ENCODE measurements at regions of chr7 and their contacts with region 1.

Region 1: GRCh38 chr7:152145853-152146466 is 120.5 kb downstream of the GALNT11 start:
- DNase-seq: peak; percentile 8
- H3K4me3 ChIP-seq: no peak overlapping the region
- H3K27ac ChIP-seq: no peak overlapping the region
- H3K27me3 ChIP-seq: no peaks in the 10 kb centered on the region
- CTCF ChIP-seq: peak; percentile 72

Region 2: DNA sequence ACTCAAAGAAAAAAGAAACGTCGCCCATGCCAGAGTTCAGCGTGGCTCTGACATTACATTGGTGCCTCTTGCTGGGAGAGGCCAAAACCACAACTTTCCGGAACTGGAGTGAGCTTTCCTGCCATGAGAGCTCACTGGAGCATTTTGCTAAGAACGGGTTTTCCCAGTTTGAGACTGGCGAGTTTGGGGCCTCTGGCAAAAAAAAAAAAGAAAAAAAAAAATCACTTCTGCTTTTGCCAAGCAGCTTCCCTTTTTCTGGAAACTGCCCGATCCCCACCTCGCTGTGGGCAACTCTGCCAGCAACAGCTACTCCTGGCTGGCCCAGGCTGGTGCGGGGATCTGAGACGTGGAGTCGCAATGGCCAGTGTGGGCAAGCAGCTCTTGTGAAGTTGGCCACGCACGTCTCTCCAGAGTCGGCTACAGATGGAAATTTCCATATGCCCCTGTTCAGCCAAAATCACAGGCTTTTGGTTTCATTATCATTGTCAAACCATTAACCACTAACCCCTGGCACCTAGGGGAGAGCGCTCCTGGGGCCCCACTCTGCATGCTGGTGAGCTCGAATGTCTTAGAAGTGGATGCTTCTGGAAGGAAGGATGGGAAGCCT is 294.7 kb before region 1 on chr7:
- CTCF ChIA-PET with region 1: no interaction called
- POLR2A ChIA-PET with region 1: no interaction called
- DNase-seq: no peak
- H3K4me3 ChIP-seq: no peak overlapping the region
- H3K27ac ChIP-seq: no peak overlapping the region
- H3K27me3 ChIP-seq: peaks cover 17% of the 10 kb centered on the region
- CTCF ChIP-seq: no peak

Region 3: DNA sequence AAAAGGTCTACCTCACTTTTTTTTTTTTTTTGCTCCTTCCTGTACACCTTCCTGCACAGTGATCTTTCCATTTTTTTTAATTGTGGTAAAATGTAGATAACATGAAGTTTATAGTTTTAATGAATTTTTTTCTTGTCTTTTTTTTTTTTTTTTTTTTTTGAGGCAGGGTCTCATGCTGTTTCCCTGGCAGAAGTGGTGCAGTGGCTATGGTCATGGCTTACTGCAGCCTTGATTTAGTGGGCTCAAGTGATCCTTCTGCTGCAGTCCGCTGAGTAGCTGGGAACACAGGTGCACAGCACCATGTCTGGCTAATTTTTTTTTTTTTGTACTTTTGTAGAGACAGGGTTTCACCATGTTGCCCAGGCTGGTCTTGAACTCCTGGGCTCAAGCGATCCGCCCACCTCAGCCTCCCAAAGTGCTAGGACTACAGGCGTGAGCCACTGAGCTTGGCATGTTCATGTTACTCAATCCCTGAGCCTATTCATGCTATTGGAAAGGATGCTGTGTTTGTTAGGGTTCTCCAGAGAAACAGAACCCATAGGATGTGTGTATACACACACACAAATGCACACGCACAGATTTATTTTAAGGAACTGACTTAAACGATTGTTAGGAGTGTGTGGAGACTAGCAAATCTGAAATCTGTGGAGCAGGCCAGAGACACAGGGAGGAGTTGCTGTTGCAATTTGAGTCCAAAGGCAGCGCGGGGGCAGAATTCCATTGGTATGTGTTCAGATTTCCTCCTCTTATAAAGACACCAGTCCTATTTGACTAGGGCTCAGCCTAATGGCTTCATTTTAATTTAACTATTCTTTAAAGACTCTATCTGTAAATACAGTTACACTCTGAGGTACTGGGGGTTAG is 91.4 kb before region 1 on chr7:
- CTCF ChIA-PET with region 1: no interaction called
- POLR2A ChIA-PET with region 1: no interaction called
- DNase-seq: peak; percentile 26
- H3K4me3 ChIP-seq: no peak overlapping the region
- H3K27ac ChIP-seq: peak overlapping the region; percentile 11
- H3K27me3 ChIP-seq: no peaks in the 10 kb centered on the region
- CTCF ChIP-seq: no peak

Region 4: DNA sequence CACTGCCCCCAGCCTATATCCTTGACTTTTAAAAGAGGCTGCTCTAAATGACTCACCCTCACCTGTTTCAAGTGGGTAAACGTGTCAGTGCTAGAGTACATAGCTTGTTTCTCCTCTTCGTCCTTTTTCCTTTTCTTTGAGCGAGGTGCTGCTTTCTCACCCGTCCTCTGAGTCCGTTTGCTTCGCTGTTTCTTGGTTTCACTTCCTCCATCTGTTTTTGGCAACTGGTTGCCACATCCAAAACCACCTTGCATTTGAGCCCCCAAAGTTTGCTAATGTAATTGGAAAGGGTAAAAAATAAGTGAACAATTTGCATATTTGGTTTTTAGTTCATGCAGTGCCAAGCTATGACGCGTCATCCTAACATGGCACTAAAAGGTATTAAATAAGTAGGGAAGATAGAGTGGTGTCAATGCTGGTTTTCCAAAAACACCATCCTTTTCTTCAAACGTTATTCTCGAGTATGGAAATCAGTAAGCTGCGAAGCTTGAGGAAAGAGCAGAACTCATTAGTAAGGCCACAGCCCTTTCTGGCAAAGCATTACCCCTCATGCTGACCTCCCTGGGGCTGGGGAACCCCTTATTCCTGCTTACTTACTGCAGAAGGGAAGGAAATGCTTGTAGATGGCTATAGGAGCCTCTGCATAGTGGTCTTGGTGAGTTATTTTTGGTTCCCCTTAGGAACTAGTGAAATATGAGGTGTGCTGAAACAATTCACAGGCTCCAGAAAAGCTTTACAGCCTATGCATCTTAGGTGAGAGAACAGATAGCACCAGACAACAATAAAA is 13.0 kb after region 1 on chr7:
- CTCF ChIA-PET with region 1: interaction called, 11 read pairs
- POLR2A ChIA-PET with region 1: no interaction called
- DNase-seq: no peak
- H3K4me3 ChIP-seq: no peak overlapping the region
- H3K27ac ChIP-seq: no peak overlapping the region
- H3K27me3 ChIP-seq: no peaks in the 10 kb centered on the region
- CTCF ChIP-seq: no peak